ENCODE measurements at regions of chr15 and their contacts with region 1.

Region 1: DNA sequence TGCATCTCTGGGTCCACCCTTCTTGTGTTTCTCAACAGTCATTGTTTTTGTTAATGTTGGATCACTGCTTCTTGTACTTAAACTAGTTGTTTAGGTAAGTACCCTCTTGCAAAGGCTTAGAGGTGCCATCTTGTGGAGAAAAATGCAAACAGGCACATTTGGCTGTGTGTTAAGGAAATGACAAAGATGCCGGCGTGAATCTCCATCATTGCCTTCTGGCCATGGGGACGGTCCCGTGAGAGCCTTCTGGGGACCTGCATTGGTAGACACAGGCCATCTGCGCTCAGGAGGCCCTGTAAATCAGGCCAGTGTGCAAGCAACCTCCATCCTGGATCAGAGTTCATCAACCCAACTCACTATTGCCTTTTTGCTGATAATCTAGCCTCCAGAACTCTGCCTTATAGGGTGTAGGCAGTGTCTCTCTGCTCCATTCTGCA is 158.6 kb upstream of the NR2E3 start:
- DNase-seq: no peak
- H3K4me3 Mint-ChIP-seq: no peak overlapping the region
- H3K27ac Mint-ChIP-seq: no peak overlapping the region
- H3K4me1 Mint-ChIP-seq: no peaks in the 10 kb centered on the region
- H3K27me3 Mint-ChIP-seq: no peaks in the 10 kb centered on the region

Region 2: DNA sequence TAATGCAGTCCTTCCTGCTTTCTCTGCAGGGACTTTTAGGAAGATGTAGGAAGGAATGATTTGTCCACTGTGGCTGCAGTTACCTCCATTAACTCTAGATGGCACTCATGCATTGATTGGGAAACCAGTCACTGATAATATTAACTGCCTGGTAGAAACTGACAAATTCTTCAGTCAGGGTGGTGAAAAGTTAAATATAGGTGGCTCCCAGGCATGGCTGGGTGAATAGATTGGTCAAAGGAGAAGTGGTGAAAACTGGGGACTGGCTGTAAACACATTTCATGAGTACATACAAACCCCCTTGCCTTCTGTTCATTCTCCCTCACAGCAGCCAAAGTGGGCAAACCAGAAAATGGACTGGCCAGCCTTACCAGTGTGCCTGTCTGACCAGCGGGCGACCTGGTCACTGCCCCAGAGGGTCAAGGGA is 203.1 kb before region 1 on chr15:
- CTCF ChIA-PET with region 1: no interaction called
- POLR2A ChIA-PET with region 1: no interaction called
- intact Hi-C with region 1: loop called (anchors 10 kb)
- DNase-seq: no peak
- H3K4me3 Mint-ChIP-seq: no peak overlapping the region
- H3K27ac Mint-ChIP-seq: no peak overlapping the region
- H3K4me1 Mint-ChIP-seq: no peaks in the 10 kb centered on the region
- H3K27me3 Mint-ChIP-seq: no peaks in the 10 kb centered on the region

Region 3: GRCh38 chr15:71639471-71639870 is 12.3 kb before region 1 on chr15:
- CTCF ChIA-PET with region 1: no interaction called
- POLR2A ChIA-PET with region 1: no interaction called
- intact Hi-C with region 1: no loop called
- DNase-seq: no peak
- H3K4me3 Mint-ChIP-seq: no peak overlapping the region
- H3K27ac Mint-ChIP-seq: no peak overlapping the region
- H3K4me1 Mint-ChIP-seq: no peaks in the 10 kb centered on the region
- H3K27me3 Mint-ChIP-seq: peaks cover 14% of the 10 kb centered on the region